ENCODE measurements at regions of chr17 and their contacts with region 1.

Region 1: DNA sequence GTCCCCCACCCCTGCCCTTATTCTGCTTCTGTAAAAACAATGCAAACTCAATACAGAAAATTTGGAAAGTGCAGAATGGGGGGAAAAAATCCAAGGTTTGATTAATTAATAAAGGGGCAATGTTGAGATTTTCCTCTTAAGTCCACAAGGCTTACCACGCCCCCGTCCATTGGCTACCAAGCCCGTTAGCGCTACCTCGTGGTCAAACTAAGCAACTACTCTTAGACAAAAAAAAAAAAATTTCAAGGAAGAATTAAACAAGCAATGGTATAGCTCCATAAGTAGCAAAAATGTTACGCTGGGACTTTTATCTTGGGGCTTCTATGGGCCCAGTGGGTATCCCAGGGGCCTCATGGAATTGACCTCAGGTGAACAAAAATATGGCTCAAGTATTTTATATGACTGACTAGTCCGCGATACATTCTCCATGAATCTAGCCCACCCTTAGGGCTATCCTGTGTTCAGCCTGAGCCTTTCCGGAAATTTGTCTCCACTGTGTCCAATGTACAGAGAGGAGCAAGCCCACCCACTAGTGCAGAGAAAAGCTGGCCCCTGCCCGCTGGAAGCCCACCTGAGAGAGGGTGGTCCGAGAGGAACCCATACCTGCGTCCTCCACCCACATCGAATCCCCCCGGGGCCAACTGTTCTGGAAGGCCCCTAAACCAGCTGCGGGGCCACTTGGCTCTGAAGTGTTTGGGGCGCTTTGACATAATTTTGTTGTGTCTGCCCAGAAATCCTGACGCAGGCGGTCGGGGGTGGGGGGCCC is 19.1 kb upstream of the TEX2 start:
- DNase-seq: peak; percentile 41 to 70
- H3K4me3 ChIP-seq: no peak overlapping the region
- H3K27ac ChIP-seq: no peak overlapping the region
- H3K4me1 ChIP-seq: peaks cover 6% of the 10 kb centered on the region; the same call in 1 of the 2 replicates
- H3K27me3 ChIP-seq: no peaks in the 10 kb centered on the region
- CTCF ChIP-seq: peak; percentile 86

Region 2: GRCh38 chr17:63919311-63919723 is 362.8 kb before region 1 on chr17:
- CTCF ChIA-PET with region 1: interaction called, 3 read pairs
- POLR2A ChIA-PET with region 1: no interaction called
- intact Hi-C with region 1: loop called (anchors 2 kb)
- DNase-seq: peak in 1 of 2 experiments; percentile 66
- H3K4me3 ChIP-seq: no peak overlapping the region
- H3K27ac ChIP-seq: no peak overlapping the region
- H3K4me1 ChIP-seq: no peaks in the 10 kb centered on the region
- H3K27me3 ChIP-seq: peaks cover 18% of the 10 kb centered on the region; the same call in 1 of the 2 replicates
- CTCF ChIP-seq: peak; percentile 96

Region 3: DNA sequence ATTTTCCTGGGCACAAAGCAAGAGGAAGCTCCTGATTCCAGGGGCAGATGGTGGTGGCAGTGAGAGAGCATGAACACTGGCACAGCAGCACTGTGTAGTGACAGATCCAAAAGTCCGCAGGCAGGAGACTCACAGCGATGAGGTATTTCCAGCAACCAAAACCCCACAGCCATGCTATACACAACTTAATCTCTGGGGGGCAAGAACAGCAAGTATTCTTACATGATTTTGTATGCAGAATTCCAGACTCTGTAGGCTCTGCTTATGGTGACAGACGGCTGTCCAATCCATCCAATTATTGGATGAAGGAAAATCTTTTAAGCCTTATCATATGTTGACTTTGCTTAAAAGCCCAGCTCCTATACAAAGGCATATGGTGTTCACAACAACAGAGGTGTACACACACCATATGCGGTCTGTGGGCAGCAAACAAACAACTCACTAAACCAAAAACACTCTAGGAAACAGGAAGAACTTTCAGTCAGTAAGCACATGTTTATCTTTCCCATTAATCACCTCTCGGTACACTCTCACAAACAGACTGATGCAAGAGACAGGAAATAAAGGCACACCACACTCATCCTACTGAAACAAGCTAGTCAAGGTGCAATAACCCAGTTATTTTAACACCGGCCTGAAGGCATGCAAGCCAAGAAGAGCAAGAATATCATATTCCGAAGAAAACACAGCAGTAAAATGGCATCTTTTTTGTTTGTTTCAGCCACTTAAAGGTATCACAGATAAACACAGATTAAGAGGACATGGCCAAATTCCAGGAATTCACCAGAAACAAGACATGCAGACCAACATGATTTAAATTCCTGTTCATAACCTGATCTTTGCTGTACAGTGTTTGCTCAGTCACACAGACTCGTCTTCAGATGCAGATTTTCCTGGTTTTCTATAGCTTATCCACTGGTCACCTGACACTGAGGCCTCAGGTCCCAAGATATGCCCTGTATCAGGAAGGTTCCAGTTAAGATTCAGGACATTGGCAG is 200.0 kb before region 1 on chr17:
- CTCF ChIA-PET with region 1: no interaction called
- POLR2A ChIA-PET with region 1: interaction called, 20 read pairs
- intact Hi-C with region 1: no loop called
- DNase-seq: peak; percentile 33 to 99
- H3K4me3 ChIP-seq: peak overlapping the region; percentile 38
- H3K27ac ChIP-seq: peak overlapping the region; percentile 99
- H3K4me1 ChIP-seq: peaks cover 77% of the 10 kb centered on the region
- H3K27me3 ChIP-seq: no peaks in the 10 kb centered on the region
- CTCF ChIP-seq: peak; percentile 20; the same call in 1 of the 2 replicates

Region 4: DNA sequence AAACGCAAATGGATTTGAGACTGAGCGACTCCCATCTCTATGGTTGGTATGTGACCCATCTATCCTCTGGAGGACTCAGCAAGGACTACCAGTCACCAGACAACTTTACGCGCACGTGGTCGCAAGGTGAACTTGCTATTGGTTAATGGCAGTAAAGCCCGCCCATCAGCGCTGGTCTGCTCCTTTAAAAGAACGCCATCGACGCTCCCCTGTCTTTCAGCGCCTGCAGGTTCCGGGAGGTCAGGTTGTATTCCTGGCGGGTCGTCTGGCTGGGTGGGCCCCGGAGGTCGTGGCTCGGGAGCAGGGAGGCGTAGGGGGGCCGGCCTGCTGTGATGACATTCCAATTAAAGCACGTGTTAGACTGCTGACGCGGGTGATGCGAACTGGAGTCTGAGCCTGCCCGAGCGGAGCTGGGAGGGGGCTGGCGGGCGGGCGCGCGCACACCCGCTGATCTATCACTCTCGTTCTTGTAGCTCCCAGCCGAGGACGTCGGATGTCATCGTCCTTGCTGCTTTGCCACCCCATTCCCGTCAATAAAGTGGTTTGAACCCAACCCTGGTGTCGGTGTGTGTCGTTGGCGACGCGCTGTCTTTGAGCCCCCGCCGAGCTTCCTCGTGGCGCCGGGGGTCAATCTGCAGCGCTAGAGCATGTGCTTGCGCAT is 136.3 kb before region 1 on chr17:
- CTCF ChIA-PET with region 1: interaction called, 6 read pairs
- POLR2A ChIA-PET with region 1: interaction called, 5 read pairs
- intact Hi-C with region 1: loop called (anchors 1 kb)
- DNase-seq: peak; percentile 93 to 98
- H3K4me3 ChIP-seq: peak overlapping the region; percentile 93
- H3K27ac ChIP-seq: peak overlapping the region; percentile 90
- H3K4me1 ChIP-seq: peaks cover 31% of the 10 kb centered on the region
- H3K27me3 ChIP-seq: no peaks in the 10 kb centered on the region
- CTCF ChIP-seq: no peak

Region 5: DNA sequence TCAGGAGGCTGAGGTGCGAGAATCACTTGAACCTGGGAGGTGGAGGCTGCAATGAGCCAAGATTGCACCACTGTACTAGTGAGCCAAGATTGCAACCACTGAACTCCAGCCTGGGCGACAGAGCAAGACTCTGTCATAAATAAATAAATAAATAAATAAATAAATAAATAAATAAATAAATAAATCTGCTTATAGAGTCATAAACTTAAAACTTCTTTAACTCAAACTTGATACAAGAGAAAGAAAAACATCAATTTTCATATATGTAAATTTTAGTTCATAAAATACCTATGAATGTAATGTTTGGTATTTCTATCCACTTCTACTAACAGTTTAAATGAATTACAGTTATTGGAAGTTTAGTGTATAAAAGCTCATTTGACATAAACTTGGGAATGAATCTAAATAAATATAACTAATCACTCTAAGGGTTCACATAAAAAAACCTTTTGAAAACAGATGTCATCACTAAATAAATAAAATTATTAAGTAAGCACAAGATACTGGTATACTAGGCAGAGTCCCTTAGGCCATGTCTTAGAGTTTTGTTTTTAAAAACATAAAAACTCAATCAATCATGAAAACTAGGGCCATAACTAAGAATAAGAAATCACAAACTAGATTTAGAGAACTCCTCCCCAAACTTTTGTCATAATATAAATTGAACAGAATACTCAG is 325.9 kb after region 1 on chr17:
- CTCF ChIA-PET with region 1: no interaction called
- POLR2A ChIA-PET with region 1: interaction called, 12 read pairs
- intact Hi-C with region 1: no loop called
- DNase-seq: no peak
- H3K4me3 ChIP-seq: no peak overlapping the region
- H3K27ac ChIP-seq: peak overlapping the region; percentile 47; the same call in 1 of the 2 replicates
- H3K4me1 ChIP-seq: no peaks in the 10 kb centered on the region
- H3K27me3 ChIP-seq: no peaks in the 10 kb centered on the region
- CTCF ChIP-seq: no peak